CD14-positive monocyte (primary cell): ENCODE measurements at regions of chr4 and their contacts with region 1.

Region 1: DNA sequence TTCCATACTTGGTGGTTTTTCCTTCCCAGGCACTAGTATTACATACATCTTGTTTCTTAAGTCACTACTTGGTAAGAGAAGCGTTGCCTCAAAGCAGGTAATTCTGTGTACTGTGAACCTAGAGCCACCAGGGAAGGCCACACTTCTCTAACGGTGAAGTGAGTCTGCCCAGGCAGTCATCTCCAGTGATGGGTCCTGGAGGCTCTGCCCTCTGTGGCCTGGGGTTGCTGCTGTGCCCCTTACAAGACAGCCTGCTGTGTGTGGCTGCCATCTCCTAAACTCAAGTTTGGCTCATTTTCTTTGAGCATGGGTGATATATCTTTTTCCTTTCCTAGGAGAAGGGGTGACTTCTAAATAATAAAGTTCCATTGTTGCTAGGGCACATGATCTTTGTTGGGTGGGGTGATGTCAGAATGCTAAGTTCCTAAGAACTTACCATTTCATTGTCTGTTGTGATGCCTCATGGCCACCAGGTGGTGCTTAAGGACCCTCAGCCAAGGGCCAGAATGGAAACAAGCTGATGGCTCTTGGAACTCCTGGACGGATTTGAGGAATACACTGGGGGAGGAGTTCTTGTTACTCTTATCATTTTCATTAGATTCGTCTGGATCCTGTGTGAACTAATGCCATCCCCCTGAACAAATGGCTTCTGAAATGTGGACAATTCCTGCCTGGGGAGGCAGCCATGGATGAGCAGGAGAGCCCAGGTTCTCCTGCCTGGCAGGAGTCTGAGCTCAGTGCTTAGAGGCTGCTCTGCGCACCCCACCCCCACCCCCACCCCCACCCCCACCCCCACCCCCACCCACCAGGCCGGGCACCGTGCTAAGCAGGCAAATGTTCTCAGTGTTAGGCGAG is 41.1 kb upstream of the WDR1 start:
- DNase-seq: peak; percentile 42 to 64 (median 51)
- H3K4me3 ChIP-seq: no peak overlapping the region
- H3K4me3 Mint-ChIP-seq: no peak overlapping the region
- H3K27ac ChIP-seq: no peak overlapping the region
- H3K27ac Mint-ChIP-seq: peak overlapping the region in 3 of 7 donors; percentile 13 to 53 (median 42)
- H3K4me1 ChIP-seq: no peaks in the 10 kb centered on the region
- H3K4me1 Mint-ChIP-seq: peaks cover 10% of the 10 kb centered on the region
- H3K27me3 ChIP-seq: no peaks in the 10 kb centered on the region
- H3K27me3 Mint-ChIP-seq: peaks cover 0 to 2% (median 1%) of the 10 kb centered on the region in 3 donors
- CTCF ChIP-seq: peak; percentile 84

Region 2: GRCh38 chr4:10535912-10536311 is 378.2 kb after region 1 on chr4:
- intact Hi-C with region 1: loop called in 1 of 2 experiments (anchors 2 kb)
- DNase-seq: no peak
- H3K4me3 ChIP-seq: no peak overlapping the region
- H3K4me3 Mint-ChIP-seq: no peak overlapping the region
- H3K27ac ChIP-seq: no peak overlapping the region
- H3K27ac Mint-ChIP-seq: no peak overlapping the region
- H3K4me1 ChIP-seq: no peaks in the 10 kb centered on the region
- H3K4me1 Mint-ChIP-seq: no peaks in the 10 kb centered on the region
- H3K27me3 ChIP-seq: no peaks in the 10 kb centered on the region
- H3K27me3 Mint-ChIP-seq: peaks cover 0 to 5% (median 2%) of the 10 kb centered on the region in 3 donors
- CTCF ChIP-seq: no peak